Adrenal gland (tissue), 19 donors: ENCODE measurements at regions of chr10 and their contacts with region 1.

Region 1: DNA sequence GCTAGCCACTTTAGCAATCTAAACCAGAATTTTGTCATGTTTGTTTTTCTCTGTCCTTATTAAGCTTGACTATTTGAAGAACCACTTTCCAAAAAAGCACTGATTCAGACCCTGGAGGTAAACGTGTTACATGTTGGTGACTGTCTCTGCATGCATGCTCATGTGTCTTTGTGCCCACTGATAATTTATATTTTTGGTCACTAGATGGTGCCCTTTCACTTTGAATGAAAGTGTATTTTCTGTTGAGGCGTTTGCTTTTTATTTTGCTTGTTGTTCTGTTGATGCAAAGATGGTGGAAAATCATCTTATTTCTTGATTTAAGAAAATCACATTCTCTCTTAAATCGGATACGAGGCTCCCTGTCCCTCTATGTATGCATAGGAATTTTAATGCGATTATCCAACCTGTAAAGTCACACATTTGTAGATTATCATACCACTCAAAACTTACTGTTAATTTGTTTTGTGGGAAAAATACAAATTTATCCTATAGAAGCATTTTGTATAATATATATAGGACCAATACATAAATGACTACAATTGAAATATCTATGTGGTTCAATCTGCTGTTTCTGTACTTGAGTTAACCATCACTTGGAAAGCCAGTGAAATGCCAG is 269.3 kb downstream of the BICC1 start:
- DNase-seq: no peak
- H3K4me3 ChIP-seq: no peak overlapping the region
- H3K27ac ChIP-seq: peak overlapping the region in 1 of 5 donors; percentile 41
- H3K4me1 ChIP-seq: peaks cover 0 to 18% of the 10 kb centered on the region in 2 donors
- H3K27me3 ChIP-seq: no peaks in the 10 kb centered on the region
- CTCF ChIP-seq: peak; percentile 60 to 78 (median 71)
- POLR2A ChIP-seq: no peak

Region 2: GRCh38 chr10:57785546-57786284 is 996.3 kb before region 1 on chr10:
- intact Hi-C with region 1: no loop called
- DNase-seq: no peak
- H3K4me3 ChIP-seq: no peak overlapping the region
- H3K27ac ChIP-seq: no peak overlapping the region
- H3K4me1 ChIP-seq: no peaks in the 10 kb centered on the region
- H3K27me3 ChIP-seq: no peaks in the 10 kb centered on the region
- CTCF ChIP-seq: no peak
- POLR2A ChIP-seq: no peak

Region 3: DNA sequence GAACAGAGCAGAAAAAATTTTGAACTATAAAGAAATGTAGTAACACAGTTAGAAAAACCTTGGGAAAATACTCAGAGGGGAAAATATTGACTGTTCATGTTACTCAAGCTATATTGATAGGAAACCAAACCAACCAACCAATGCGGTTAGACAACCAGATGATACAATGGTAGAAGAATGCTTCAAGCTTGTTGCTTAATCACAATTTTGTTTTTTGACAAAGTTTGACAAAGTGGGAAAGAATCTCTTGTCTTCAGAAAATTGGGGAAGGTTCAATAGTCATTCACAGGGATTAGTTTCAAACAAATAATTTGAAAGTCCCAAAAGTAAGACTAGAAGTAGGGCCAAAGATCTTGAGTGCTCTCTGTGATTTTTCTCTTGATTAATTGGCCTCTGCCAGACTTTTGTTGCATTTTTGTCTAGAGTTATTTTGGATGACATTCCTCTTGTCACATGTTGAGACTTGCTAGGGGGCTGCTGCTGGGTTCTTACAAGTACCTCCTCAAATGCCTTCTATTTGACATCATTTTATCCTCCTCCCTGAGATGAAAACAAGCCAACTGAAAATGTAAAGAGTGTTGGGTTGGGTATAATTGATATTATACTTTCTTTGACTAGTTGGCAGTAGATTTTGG is 161.4 kb after region 1 on chr10:
- intact Hi-C with region 1: loop called in 1 of 2 experiments (anchors 10 kb)
- DNase-seq: no peak
- H3K4me3 ChIP-seq: no peak overlapping the region
- H3K27ac ChIP-seq: no peak overlapping the region
- H3K4me1 ChIP-seq: peaks cover 0 to 14% of the 10 kb centered on the region in 2 donors
- H3K27me3 ChIP-seq: no peaks in the 10 kb centered on the region
- CTCF ChIP-seq: no peak
- POLR2A ChIP-seq: no peak

Region 4: DNA sequence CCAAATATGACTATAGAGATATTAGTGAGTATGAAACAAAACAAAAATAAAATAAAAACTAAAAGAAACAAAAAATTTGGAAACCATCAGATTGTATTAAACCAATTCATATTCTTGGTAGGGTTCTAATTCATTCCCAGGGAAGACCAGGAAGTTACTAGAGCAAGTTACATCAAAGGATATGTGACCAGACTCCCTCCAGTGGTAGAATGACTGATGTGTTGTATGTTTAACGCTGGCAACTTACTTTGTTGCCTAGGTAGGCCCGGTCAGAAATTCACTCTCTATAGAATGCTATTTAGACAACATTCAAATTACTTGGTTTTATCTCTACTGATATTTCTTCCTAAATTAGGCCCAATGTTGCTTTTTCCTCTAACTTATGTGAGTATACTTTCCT is 399.7 kb after region 1 on chr10:
- intact Hi-C with region 1: loop called in 1 of 2 experiments (anchors 5 kb)
- DNase-seq: peak in 3 of 7 donors; percentile 7 to 21 (median 14)
- H3K4me3 ChIP-seq: no peak overlapping the region
- H3K27ac ChIP-seq: no peak overlapping the region
- H3K4me1 ChIP-seq: peaks cover 0 to 4% of the 10 kb centered on the region in 2 donors
- H3K27me3 ChIP-seq: no peaks in the 10 kb centered on the region
- CTCF ChIP-seq: peak; percentile 29 to 64 (median 56)
- POLR2A ChIP-seq: no peak